ENCODE measurements at regions of chr12 and their contacts with region 1.

Region 1: GRCh38 chr12:49130151-49131050 is 794 bp downstream of the TUBA1B start:
- DNase-seq: peak; percentile 63
- H3K4me3 ChIP-seq: peak overlapping the region; percentile 96
- CTCF ChIP-seq: peak; percentile 98

Region 2: GRCh38 chr12:48901278-48901677 is 229.1 kb before region 1 on chr12:
- CTCF ChIA-PET with region 1: no interaction called
- POLR2A ChIA-PET with region 1: no interaction called
- DNase-seq: no peak
- H3K4me3 ChIP-seq: no peak overlapping the region
- CTCF ChIP-seq: no peak

Region 3: GRCh38 chr12:48924617-48925303 is 205.6 kb before region 1 on chr12:
- CTCF ChIA-PET with region 1: no interaction called
- POLR2A ChIA-PET with region 1: no interaction called
- DNase-seq: no peak
- H3K4me3 ChIP-seq: peak overlapping the region; percentile 89
- CTCF ChIP-seq: peak; percentile 67

Region 4: GRCh38 chr12:48947727-48948126 is 182.7 kb before region 1 on chr12:
- CTCF ChIA-PET with region 1: no interaction called
- POLR2A ChIA-PET with region 1: no interaction called
- DNase-seq: no peak
- H3K4me3 ChIP-seq: no peak overlapping the region
- CTCF ChIP-seq: no peak

Region 5: DNA sequence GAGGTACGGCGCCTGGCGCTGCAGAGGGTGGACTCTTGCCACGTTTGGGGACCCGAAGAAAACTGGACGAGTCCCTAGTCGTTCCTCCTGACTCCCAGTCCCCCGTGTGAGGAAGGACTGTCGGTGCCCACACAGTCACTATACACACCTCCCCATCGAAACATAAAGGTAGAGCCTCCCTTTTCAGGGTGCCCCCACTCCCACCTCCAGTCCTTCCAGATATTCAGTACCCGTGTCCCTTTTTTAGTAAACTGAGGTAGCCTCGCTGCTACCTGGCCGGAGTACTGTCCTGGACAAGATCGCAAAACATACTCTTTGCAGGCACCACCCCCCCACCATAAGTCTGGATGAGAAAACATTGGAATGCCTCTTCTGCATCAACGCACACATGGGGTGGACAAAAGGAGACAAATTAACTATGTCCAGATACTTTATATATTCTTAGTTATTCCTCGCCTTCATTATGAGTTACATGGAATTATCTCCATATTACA is 69.2 kb before region 1 on chr12:
- CTCF ChIA-PET with region 1: interaction called, 95 read pairs
- POLR2A ChIA-PET with region 1: interaction called, 11 read pairs
- DNase-seq: no peak
- H3K4me3 ChIP-seq: peak overlapping the region; percentile 84
- CTCF ChIP-seq: no peak

Region 6: GRCh38 chr12:49088190-49088931 is 42.0 kb before region 1 on chr12:
- CTCF ChIA-PET with region 1: interaction called, 57 read pairs
- POLR2A ChIA-PET with region 1: interaction called, 20 read pairs
- DNase-seq: peak; percentile 41
- H3K4me3 ChIP-seq: no peak overlapping the region
- CTCF ChIP-seq: peak; percentile 87

Region 7: GRCh38 chr12:49110464-49111155 is 19.8 kb before region 1 on chr12 and contains the start of gene LMBR1L:
- CTCF ChIA-PET with region 1: interaction called, 110 read pairs
- POLR2A ChIA-PET with region 1: interaction called, 31 read pairs
- DNase-seq: peak; percentile 88
- H3K4me3 ChIP-seq: peak within 1 kb of the TSS; percentile 87
- CTCF ChIP-seq: peak; percentile 62

Region 8: DNA sequence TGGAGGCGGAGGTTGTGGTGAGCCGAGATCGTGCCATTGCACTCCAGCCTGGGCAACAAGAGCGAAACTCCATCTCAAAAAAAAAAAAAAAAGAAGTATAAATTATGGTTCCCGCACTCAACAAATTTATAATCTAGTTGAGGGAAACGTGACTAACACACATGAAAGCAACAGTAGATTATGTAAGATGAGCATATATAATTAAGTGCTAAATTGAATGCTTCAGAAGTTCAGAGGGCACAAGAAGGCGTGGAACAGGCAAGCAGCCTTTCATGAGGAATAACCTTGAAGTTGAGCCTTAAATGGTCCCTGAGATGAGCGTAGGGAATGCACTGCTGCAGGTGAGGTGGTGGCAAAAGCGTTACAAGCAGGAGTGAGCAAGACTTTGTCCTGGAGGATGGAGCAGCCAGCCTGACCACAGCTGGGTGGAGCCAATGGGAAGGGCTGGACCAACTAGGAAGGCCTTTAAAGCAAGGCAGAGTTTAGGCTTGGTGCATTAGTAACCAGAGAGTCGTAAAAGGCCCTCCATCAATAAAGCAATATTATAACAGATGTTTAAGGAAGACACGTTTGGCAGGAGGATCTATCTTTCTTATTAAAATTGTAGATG is 89.1 kb after region 1 on chr12:
- CTCF ChIA-PET with region 1: interaction called, 10 read pairs
- POLR2A ChIA-PET with region 1: interaction called, 35 read pairs
- DNase-seq: no peak
- H3K4me3 ChIP-seq: no peak overlapping the region
- CTCF ChIP-seq: no peak

Region 9: DNA sequence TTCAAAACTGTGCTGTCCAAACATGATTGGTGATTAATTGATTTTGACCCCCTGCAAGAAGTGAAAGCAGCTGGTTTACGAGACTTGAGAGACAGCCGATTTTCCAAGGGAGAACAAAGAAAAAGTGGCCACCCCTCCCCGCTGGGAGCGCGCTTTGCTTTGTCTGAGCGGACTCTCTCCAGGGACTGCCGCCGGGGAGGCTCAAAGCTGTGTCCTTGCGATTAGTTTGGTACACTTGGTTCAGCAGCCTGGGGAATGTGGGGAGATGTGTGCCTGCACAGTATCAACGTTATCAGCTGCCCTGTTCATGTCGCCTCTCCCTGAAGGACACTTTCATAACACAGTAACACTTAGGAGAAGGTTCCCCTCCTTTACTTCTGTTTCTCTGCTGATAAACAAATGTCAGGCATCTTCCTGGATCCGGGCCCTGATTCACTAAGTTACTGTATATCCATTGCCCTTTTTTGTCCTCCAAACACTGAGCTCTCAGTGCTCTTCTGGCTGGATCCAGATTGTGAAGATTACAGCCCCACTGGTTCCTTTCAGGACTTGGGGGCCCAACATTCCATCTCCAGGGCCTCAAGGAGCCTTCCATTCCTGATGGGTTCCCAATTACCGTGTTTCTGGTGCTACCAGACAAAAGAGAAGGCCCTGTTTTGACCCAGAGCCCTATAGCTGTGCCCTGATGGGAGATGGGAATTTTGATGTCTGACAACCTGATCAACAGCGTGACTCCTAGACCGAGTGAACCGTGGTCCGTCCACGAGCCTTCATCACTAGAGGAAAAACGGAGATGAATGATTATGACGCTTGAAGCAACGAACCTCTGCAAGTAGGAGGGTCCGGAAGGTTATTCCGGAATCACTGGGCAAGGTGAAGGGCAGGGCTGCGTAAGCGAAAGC is 102.8 kb after region 1 on chr12:
- CTCF ChIA-PET with region 1: interaction called, 93 read pairs
- POLR2A ChIA-PET with region 1: interaction called, 36 read pairs
- DNase-seq: no peak
- H3K4me3 ChIP-seq: peak overlapping the region; percentile 1
- CTCF ChIP-seq: peak; percentile 16

Region 10: GRCh38 chr12:49264738-49265515 is 134.5 kb after region 1 on chr12 and contains the start of gene TUBA1C:
- CTCF ChIA-PET with region 1: interaction called, 12 read pairs
- POLR2A ChIA-PET with region 1: interaction called, 24 read pairs
- DNase-seq: no peak
- H3K4me3 ChIP-seq: peak within 1 kb of the TSS; percentile 94
- CTCF ChIP-seq: no peak